PC-9 (cell line): ENCODE measurements at regions of chr2 and their contacts with region 1.

Region 1: DNA sequence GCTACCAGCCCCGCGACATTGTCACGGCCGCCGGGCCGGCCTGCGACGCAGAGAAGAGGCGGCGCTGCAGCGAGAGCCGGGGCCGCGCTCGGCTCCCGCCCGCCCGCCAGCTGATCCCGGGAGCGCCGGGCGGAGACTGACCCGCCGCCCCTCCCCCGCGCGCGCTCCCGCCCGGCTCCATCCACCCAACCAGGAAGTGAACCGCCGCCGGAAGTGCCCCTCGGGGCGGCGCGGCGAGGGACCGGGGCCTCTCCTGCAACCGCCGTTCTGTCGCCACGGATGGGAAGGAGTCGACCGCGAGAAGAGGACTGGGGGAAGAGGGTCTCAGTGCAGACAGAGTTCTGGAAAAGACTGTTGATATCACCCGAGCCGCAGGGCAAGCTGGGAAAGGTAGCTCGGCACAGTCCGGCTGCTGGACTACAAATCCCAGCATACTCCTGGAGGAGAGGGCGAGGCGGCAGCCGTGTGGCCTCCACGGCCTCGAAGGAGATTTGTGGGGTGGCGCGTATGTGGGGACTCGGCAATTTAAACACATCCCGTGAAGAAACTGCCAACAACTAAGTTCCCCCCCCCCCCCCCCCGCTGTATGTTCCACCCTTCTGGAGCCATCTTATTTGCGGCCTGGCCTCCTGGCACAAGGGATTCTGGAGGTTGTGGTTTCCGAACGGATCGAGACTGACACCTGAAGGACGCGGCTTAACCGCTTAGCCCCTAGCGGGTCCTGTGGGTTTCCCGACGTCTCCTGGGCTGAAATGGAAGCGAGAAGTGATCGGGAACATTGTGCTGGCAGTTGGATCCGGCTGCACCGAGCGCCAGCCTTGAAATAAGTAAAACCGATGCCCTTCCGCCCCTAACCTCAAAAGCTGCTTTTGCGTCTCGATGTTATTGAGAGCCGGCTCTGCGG is at the start of gene AAK1:
- DNase-seq: peak; percentile 73 to 86
- H3K4me3 ChIP-seq: peak within 1 kb of the TSS; percentile 86
- H3K27ac ChIP-seq: peak within 1 kb of the TSS; percentile 90
- H3K4me1 ChIP-seq: peaks cover 48% of the 10 kb centered on the region
- H3K27me3 ChIP-seq: no peaks in the 10 kb centered on the region
- CTCF ChIP-seq: no peak
- total RNA-seq, gene AAK1: 50.3 and 66.6 TPM in 2 replicates

Region 2: DNA sequence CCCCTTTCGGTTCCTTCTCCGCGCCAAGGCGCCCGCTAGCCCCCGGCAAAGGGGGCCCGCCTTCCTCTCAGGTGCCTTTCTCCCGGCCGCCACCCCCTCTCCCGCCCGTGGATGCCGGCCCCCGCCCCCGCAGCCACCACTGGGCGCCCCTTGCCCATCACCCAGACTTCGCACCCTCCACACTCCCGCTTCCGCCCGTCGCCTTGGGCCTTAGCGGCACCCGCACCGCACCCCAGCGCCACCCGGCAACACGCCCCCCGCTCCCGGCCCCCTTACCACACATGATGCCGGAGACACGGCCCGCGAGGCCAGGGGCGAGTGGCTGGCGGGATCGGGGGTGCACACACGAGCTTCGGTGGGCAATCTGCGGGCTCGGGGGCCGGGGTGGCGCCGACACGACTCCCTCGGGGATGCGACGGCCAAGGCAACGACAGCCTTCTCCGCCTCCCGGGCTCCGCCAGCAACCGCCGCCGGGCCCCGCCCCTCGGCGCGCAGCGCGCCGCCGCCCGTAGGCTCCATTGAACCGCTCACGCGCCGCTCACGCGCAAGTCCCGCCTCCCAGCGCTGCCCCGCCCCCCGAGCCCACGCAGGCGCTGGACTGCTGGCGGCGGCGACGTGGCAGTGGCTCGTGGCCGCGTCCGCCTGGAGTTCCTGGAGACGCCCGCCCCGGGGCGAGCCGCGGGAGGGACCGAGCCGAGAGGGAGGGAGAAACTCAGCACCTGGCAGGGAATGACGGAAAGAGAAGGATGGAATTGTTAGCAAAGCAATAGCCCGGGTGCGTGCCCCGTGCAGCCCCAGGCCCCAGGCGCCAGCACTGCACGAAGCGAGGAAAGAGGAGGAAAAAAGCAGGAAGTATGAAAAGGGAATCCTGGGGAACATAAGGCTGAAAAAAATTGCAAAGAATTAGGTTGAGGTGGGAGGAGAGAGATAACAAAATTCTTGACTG is 256.8 kb before region 1 on chr2 and contains the start of gene GFPT1:
- CTCF ChIA-PET with region 1: no interaction called
- POLR2A ChIA-PET with region 1: no interaction called
- intact Hi-C with region 1: loop called (anchors 5 kb)
- DNase-seq: peak; percentile 83 to 96
- H3K4me3 ChIP-seq: peak within 1 kb of the TSS; percentile 90
- H3K27ac ChIP-seq: peak within 1 kb of the TSS; percentile 76
- H3K4me1 ChIP-seq: peaks cover 42% of the 10 kb centered on the region
- H3K27me3 ChIP-seq: no peaks in the 10 kb centered on the region
- CTCF ChIP-seq: no peak
- total RNA-seq, gene GFPT1: 58.3 and 60.2 TPM in 2 replicates

Region 3: DNA sequence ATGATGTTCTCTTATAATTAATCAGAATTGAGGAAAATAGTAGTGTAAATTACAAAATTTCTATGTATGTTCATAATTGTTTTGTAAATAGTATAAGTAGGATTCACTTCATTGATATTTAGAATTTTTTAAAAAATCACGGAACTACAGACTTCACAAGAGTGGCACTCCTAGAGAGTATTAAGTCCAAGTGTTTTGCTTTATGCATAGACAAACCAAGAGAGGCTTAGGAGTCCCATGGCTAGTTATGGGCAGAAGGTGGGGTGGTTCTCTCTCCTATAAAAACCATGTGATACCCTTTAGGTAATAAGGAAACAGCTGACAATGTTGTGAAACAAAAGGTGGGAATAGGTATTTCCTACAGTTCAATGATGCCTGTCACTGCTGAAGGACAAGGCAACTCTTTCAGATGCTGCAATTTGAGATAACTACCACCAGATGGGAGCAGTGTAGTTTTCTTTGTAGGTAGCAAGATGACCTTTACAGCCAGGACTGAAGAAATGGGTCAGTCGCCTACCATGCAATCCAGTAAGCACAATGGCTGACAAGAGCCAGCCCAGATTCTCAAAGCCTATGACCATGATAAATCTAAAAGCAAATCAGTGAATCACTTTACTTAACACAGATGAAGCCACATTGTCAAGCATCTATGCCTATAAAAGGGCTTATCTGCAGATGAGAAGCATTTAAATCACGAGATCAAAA is 84.3 kb before region 1 on chr2:
- CTCF ChIA-PET with region 1: no interaction called
- POLR2A ChIA-PET with region 1: no interaction called
- intact Hi-C with region 1: loop called (anchors 1 kb)
- DNase-seq: peak; percentile 19 to 76
- H3K4me3 ChIP-seq: no peak overlapping the region
- H3K27ac ChIP-seq: no peak overlapping the region
- H3K4me1 ChIP-seq: peaks cover 25% of the 10 kb centered on the region
- H3K27me3 ChIP-seq: no peaks in the 10 kb centered on the region
- CTCF ChIP-seq: peak; percentile 83

Region 4: DNA sequence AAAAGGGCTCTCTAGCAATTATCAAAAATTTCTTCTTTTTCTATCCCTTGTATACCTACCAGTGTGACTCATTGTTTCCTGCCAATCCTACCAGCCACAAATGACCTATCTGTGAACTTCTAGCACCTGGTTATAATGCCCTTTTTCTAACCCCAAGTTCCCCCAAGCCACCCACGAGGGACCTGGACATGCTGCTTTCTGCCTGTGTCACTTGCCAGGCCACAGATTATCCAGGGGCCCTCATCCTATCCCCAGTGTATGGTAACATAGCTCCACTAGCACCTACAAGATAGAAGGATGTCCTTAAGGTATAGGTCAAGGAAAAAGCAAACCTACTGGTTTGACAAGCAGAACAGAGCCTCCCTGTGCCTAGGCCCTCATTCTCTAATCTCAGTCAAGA is 27.1 kb before region 1 on chr2:
- CTCF ChIA-PET with region 1: no interaction called
- POLR2A ChIA-PET with region 1: no interaction called
- intact Hi-C with region 1: loop called (anchors 2 kb)
- DNase-seq: peak; percentile 65 to 86
- H3K4me3 ChIP-seq: peak overlapping the region; percentile 19; the same call in 1 of the 2 replicates
- H3K27ac ChIP-seq: peak overlapping the region; percentile 76
- H3K4me1 ChIP-seq: peaks cover 64% of the 10 kb centered on the region
- H3K27me3 ChIP-seq: no peaks in the 10 kb centered on the region
- CTCF ChIP-seq: no peak

Region 5: GRCh38 chr2:69714024-69714423 is 70.2 kb after region 1 on chr2:
- CTCF ChIA-PET with region 1: no interaction called
- POLR2A ChIA-PET with region 1: interaction called, 3 read pairs
- intact Hi-C with region 1: loop called (anchors 1 kb)
- DNase-seq: no peak
- H3K4me3 ChIP-seq: no peak overlapping the region
- H3K27ac ChIP-seq: no peak overlapping the region
- H3K4me1 ChIP-seq: no peaks in the 10 kb centered on the region
- H3K27me3 ChIP-seq: no peaks in the 10 kb centered on the region
- CTCF ChIP-seq: no peak